Natural killer cell (primary cell): ENCODE measurements at regions of chr19 and their contacts with region 1.

Region 1: DNA sequence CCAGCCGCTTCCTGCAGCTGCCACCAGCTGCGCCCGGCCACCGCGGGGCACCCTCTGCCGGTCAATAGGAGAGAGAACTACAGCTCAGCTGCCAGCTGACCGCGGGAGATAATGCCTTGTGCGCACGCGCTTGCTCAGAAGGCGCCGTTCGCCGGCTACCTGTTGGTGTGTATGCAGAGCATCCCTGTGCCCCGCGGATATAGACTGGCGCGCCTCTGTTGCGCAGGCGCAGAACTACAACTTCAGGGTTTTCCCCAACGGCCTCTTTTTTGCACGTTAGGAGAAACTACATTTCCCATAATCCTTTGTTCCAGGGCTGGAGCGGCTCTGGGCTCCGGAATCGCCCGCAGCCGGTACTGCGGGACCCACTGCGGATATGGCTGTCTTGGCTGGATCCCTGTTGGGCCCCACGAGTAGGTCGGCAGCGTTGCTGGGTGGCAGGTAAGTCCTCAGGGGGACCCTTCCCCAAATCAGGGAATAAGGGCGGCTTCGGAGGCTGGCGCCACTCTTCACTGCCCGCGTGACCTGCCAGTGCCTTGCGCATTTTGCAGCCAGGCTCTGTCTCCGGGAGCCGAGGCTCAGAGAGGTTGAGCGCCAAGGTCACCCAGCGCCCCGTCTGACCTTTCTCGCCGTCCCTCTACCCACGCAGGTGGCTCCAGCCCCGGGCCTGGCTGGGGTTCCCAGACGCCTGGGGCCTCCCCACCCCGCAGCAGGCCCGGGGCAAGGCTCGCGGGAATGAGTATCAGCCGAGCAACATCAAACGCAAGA is at the start of gene MRPL34:
- DNase-seq: peak; percentile 86 to 98
- ATAC-seq: peak; percentile 50 to 78 (median 62)
- H3K4me3 ChIP-seq: peak within 1 kb of the TSS; percentile 55
- H3K4me3 Mint-ChIP-seq: peak within 1 kb of the TSS; percentile 82
- H3K27ac ChIP-seq: peak within 1 kb of the TSS; percentile 58
- H3K27ac Mint-ChIP-seq: peak within 1 kb of the TSS; percentile 81 to 89
- H3K4me1 ChIP-seq: peaks cover 54% of the 10 kb centered on the region
- H3K4me1 Mint-ChIP-seq: peaks cover 32 to 49% of the 10 kb centered on the region in 2 donors
- H3K27me3 ChIP-seq: no peaks in the 10 kb centered on the region
- H3K27me3 Mint-ChIP-seq: no peaks in the 10 kb centered on the region
- CTCF ChIP-seq: peak; percentile 66
- total RNA-seq, gene MRPL34: 26.9 to 40.8 (median 39.4) TPM

Region 2: GRCh38 chr19:17266975-17267788 is 38.5 kb before region 1 on chr19 and contains the start of gene BABAM1:
- intact Hi-C with region 1: loop called (anchors 1 kb)
- DNase-seq: peak; percentile 86 to 98
- ATAC-seq: peak; percentile 90 to 97 (median 91)
- H3K4me3 ChIP-seq: peak within 1 kb of the TSS; percentile 82
- H3K4me3 Mint-ChIP-seq: peak within 1 kb of the TSS; percentile 88
- H3K27ac ChIP-seq: peak within 1 kb of the TSS; percentile 63
- H3K27ac Mint-ChIP-seq: peak within 1 kb of the TSS; percentile 85
- H3K4me1 ChIP-seq: peaks cover 24% of the 10 kb centered on the region
- H3K4me1 Mint-ChIP-seq: peaks cover 15 to 16% of the 10 kb centered on the region in 2 donors
- H3K27me3 ChIP-seq: no peaks in the 10 kb centered on the region
- H3K27me3 Mint-ChIP-seq: no peaks in the 10 kb centered on the region
- CTCF ChIP-seq: no peak
- total RNA-seq, gene BABAM1: 106 to 127 (median 106) TPM

Region 3: GRCh38 chr19:17282488-17283255 is 23.0 kb before region 1 on chr19:
- intact Hi-C with region 1: no loop called
- DNase-seq: peak; percentile 76 to 87
- ATAC-seq: peak; percentile 92 to 98 (median 96)
- H3K4me3 ChIP-seq: peak overlapping the region; percentile 31
- H3K4me3 Mint-ChIP-seq: peak overlapping the region; percentile 74
- H3K27ac ChIP-seq: no peak overlapping the region
- H3K27ac Mint-ChIP-seq: no peak overlapping the region
- H3K4me1 ChIP-seq: peaks cover 19% of the 10 kb centered on the region
- H3K4me1 Mint-ChIP-seq: peaks cover 0 to 14% of the 10 kb centered on the region in 2 donors
- H3K27me3 ChIP-seq: peaks cover 12% of the 10 kb centered on the region
- H3K27me3 Mint-ChIP-seq: peaks cover 0 to 22% of the 10 kb centered on the region in 2 donors
- CTCF ChIP-seq: peak; percentile 86